GM23248 (cell line): ENCODE measurements at regions of chr1 and their contacts with region 1.

Region 1: DNA sequence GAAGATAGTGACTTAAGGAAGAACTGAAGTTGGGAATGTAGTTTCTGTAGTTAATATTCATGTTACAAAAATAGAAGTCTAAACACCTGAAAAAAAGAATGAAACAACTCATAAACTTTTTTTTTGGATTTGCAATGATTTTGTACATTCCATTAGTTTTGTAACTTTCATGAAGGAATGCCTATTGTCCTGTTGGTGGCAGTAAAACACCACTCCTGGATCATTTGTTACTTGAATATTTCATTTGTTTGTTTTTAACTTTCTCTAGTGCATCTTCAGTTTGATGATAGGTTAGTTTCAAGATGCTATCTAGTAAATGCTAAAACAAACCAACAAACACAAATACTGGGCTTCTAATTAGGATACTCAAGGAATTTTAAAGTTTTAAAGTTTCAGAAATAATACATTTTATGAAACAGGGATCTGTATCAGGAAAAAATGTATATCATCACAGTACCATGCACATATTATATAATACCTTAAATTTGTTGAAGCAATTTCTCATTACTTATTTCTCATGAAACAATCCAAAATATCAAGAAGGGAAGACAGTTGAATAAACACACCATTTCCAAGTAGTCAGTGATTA is 229.7 kb upstream of the CACYBP start:
- DNase-seq: peak; percentile 66
- H3K4me3 ChIP-seq: no peak overlapping the region
- H3K27ac ChIP-seq: no peak overlapping the region
- H3K4me1 ChIP-seq: no peaks in the 10 kb centered on the region
- H3K27me3 ChIP-seq: no peaks in the 10 kb centered on the region

Region 2: GRCh38 chr1:174324939-174325338 is 445.1 kb before region 1 on chr1:
- in situ Hi-C with region 1: no loop called
- DNase-seq: no peak
- H3K4me3 ChIP-seq: no peak overlapping the region
- H3K27ac ChIP-seq: no peak overlapping the region
- H3K4me1 ChIP-seq: no peaks in the 10 kb centered on the region
- H3K27me3 ChIP-seq: no peaks in the 10 kb centered on the region

Region 3: GRCh38 chr1:174976436-174977108 is 206.5 kb after region 1 on chr1:
- in situ Hi-C with region 1: loop called (anchors 10 kb)
- DNase-seq: peak; percentile 82
- H3K4me3 ChIP-seq: no peak overlapping the region
- H3K27ac ChIP-seq: peak overlapping the region; percentile 35
- H3K4me1 ChIP-seq: peaks cover 15% of the 10 kb centered on the region
- H3K27me3 ChIP-seq: no peaks in the 10 kb centered on the region

Region 4: GRCh38 chr1:175062858-175063257 is 292.8 kb after region 1 on chr1:
- in situ Hi-C with region 1: no loop called
- DNase-seq: no peak
- H3K4me3 ChIP-seq: no peak overlapping the region
- H3K27ac ChIP-seq: no peak overlapping the region
- H3K4me1 ChIP-seq: no peaks in the 10 kb centered on the region
- H3K27me3 ChIP-seq: peaks cover 5% of the 10 kb centered on the region; the same call in 1 of the 2 replicates

Region 5: GRCh38 chr1:175146529-175147213 is 376.6 kb after region 1 on chr1:
- in situ Hi-C with region 1: loop called (anchors 25 kb)
- DNase-seq: peak; percentile 68
- H3K4me3 ChIP-seq: no peak overlapping the region
- H3K27ac ChIP-seq: no peak overlapping the region
- H3K4me1 ChIP-seq: peaks cover 7% of the 10 kb centered on the region
- H3K27me3 ChIP-seq: no peaks in the 10 kb centered on the region